CD4-positive, alpha-beta memory T cell (primary cell): ENCODE measurements at regions of chr16 and their contacts with region 1.

Region 1: DNA sequence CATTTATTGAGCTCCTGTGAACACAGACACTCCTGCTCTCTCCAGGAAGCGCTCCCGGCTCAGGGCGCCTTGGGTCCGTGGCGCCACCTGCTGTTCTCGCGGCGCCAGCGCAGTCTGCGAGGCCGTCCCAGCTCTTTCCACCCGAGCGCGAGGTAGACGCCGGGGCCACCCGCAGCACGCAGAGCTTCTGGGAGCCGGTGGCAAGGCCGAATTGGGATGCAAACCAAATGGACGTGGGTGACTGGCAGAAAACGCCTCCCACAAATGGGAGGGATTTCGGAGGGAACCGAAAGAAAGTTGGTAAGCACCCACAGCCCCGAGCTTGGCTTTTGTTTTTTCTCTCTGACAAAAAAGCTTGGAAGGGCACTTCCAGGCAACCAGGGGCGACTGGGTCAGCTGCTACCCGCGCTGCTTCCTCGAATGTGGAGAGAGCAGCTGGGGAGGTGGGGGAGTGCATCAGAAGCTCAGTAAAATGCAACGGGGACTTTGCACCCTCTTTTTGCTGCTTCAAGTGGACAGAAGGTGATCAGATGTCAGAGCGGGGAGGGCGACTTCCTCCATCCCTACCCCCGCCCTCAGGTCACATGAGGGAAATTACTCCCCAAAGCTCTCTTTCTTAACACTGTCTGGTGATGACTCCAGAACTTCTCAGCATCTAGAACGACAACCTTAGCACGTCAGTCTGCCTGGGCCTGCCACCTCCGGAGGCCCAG is 13.5 kb upstream of the N4BP1 start:
- DNase-seq: peak; percentile 71 to 84 (median 78)
- H3K4me3 ChIP-seq: peak overlapping the region; percentile 22 to 53
- H3K4me3 Mint-ChIP-seq: peak overlapping the region; percentile 64 to 89 (median 80)
- H3K27ac ChIP-seq: peak overlapping the region; percentile 26
- H3K27ac Mint-ChIP-seq: peak overlapping the region in 5 of 7 donors; percentile 15 to 86 (median 54)
- H3K4me1 ChIP-seq: peaks cover 10% of the 10 kb centered on the region
- H3K4me1 Mint-ChIP-seq: peaks cover 5 to 19% (median 10%) of the 10 kb centered on the region in 4 donors
- H3K27me3 ChIP-seq: no peaks in the 10 kb centered on the region
- H3K27me3 Mint-ChIP-seq: no peaks in the 10 kb centered on the region

Region 2: DNA sequence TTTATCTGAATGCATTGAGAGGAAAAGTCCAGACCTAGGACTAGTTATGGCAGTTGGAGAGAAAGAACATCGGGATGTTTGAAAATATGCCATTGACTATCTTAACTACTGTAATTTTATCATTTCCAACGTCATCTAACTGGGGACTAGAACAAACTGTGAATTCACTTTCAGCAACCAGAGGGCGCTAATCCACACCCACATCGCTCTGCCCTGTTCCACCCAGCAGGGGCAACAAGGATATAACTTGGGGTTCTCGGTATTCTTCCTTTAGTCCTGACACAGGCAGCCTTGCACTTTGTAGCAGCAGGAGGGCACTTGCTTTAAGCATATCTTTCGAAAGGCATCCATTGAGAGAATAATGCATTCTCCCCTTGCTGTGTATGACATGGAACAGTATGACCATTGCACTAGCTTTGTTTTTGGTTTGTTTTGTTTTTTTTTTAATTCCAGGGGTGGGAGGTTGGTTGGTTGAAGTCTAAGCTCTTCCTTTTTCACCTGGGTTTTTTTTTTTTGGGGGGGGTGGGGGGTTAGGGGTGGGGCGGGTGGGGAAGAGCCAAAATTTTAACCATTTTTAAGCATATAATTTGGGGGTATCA is 269.8 kb before region 1 on chr16:
- CTCF ChIA-PET with region 1: interaction called, 185 read pairs
- POLR2A ChIA-PET with region 1: interaction called, 6 read pairs
- intact Hi-C with region 1: loop called (anchors 1 kb)
- DNase-seq: peak; percentile 71 to 81 (median 73)
- H3K4me3 ChIP-seq: no peak overlapping the region
- H3K4me3 Mint-ChIP-seq: no peak overlapping the region
- H3K27ac ChIP-seq: no peak overlapping the region
- H3K27ac Mint-ChIP-seq: peak overlapping the region in 6 of 7 donors; percentile 1 to 86 (median 60)
- H3K4me1 ChIP-seq: peaks cover 3% of the 10 kb centered on the region
- H3K4me1 Mint-ChIP-seq: peaks cover 5 to 22% (median 7%) of the 10 kb centered on the region in 4 donors
- H3K27me3 ChIP-seq: no peaks in the 10 kb centered on the region
- H3K27me3 Mint-ChIP-seq: no peaks in the 10 kb centered on the region

Region 3: GRCh38 chr16:48499923-48500381 is 123.5 kb before region 1 on chr16:
- CTCF ChIA-PET with region 1: interaction called, 11 read pairs
- POLR2A ChIA-PET with region 1: no interaction called
- intact Hi-C with region 1: no loop called
- DNase-seq: no peak
- H3K4me3 ChIP-seq: no peak overlapping the region
- H3K4me3 Mint-ChIP-seq: no peak overlapping the region
- H3K27ac ChIP-seq: no peak overlapping the region
- H3K27ac Mint-ChIP-seq: no peak overlapping the region
- H3K4me1 ChIP-seq: no peaks in the 10 kb centered on the region
- H3K4me1 Mint-ChIP-seq: no peaks in the 10 kb centered on the region
- H3K27me3 ChIP-seq: no peaks in the 10 kb centered on the region
- H3K27me3 Mint-ChIP-seq: no peaks in the 10 kb centered on the region

Region 4: DNA sequence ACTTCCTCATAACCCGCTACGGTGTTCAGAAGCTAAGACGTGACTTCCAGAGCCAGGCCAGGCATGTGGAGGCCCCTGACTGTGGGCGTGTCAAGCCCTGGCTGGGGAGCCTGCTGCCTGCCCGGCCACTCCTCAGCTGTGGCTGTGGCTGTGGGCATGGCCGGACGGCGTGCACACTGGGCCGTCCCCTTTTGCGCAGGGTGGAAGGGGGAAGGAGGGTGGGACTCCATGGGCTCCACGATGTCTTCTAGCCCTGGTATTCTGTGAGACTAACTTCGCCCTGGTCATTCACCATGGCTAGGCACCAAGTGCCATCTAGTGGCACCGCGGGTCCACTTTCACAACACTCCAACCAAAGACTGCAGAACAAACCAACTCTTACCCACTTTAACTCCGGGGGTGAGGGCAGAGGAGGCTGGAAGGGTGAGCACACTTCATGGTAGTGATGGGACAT is 81.4 kb before region 1 on chr16:
- CTCF ChIA-PET with region 1: interaction called, 98 read pairs
- POLR2A ChIA-PET with region 1: interaction called, 4 read pairs
- intact Hi-C with region 1: loop called (anchors 1 kb)
- DNase-seq: no peak
- H3K4me3 ChIP-seq: no peak overlapping the region
- H3K4me3 Mint-ChIP-seq: no peak overlapping the region
- H3K27ac ChIP-seq: no peak overlapping the region
- H3K27ac Mint-ChIP-seq: peak overlapping the region in 1 of 7 donors; percentile 29
- H3K4me1 ChIP-seq: peaks cover 5% of the 10 kb centered on the region
- H3K4me1 Mint-ChIP-seq: peaks cover 5 to 24% (median 8%) of the 10 kb centered on the region in 4 donors
- H3K27me3 ChIP-seq: no peaks in the 10 kb centered on the region
- H3K27me3 Mint-ChIP-seq: no peaks in the 10 kb centered on the region

Region 5: GRCh38 chr16:48596326-48596725 is 27.1 kb before region 1 on chr16:
- CTCF ChIA-PET with region 1: interaction called, 32 read pairs
- POLR2A ChIA-PET with region 1: interaction called, 5 read pairs
- intact Hi-C with region 1: no loop called
- DNase-seq: no peak
- H3K4me3 ChIP-seq: no peak overlapping the region
- H3K4me3 Mint-ChIP-seq: peak overlapping the region in 3 of 8 donors; percentile 43 to 71 (median 64)
- H3K27ac ChIP-seq: no peak overlapping the region
- H3K27ac Mint-ChIP-seq: peak overlapping the region in 6 of 7 donors; percentile 5 to 70 (median 55)
- H3K4me1 ChIP-seq: peaks cover 58% of the 10 kb centered on the region
- H3K4me1 Mint-ChIP-seq: peaks cover 47 to 71% (median 62%) of the 10 kb centered on the region in 4 donors
- H3K27me3 ChIP-seq: no peaks in the 10 kb centered on the region
- H3K27me3 Mint-ChIP-seq: no peaks in the 10 kb centered on the region